ENCODE measurements at regions of chr1 and their contacts with region 1.

Region 1: GRCh38 chr1:203795441-203796235 is at the starts of genes ZBED6 and ZC3H11A:
- DNase-seq: peak; percentile 99
- ATAC-seq: peak; percentile 96
- H3K4me3 ChIP-seq: peak within 1 kb of the TSS; percentile 89
- H3K27ac ChIP-seq: peak within 1 kb of the TSS; percentile 78
- H3K4me1 ChIP-seq: peaks cover 25% of the 10 kb centered on the region
- H3K27me3 ChIP-seq: no peaks in the 10 kb centered on the region
- CTCF ChIP-seq: no peak
- total RNA-seq, gene ZBED6: 12.9 and 13.1 TPM in 2 replicates
- total RNA-seq, gene ZC3H11A: 64.6 and 77.9 TPM in 2 replicates

Region 2: GRCh38 chr1:203534527-203535230 is 261.0 kb before region 1 on chr1:
- CTCF ChIA-PET with region 1: no interaction called
- POLR2A ChIA-PET with region 1: no interaction called
- intact Hi-C with region 1: loop called (anchors 10 kb)
- DNase-seq: peak; percentile 99
- ATAC-seq: peak; percentile 68
- H3K4me3 ChIP-seq: peak overlapping the region; percentile 3; the same call in 1 of the 2 replicates
- H3K27ac ChIP-seq: peak overlapping the region; percentile 87
- H3K4me1 ChIP-seq: peaks cover 63% of the 10 kb centered on the region
- H3K27me3 ChIP-seq: no peaks in the 10 kb centered on the region
- CTCF ChIP-seq: no peak

Region 3: GRCh38 chr1:203720262-203720661 is 75.4 kb before region 1 on chr1:
- CTCF ChIA-PET with region 1: no interaction called
- POLR2A ChIA-PET with region 1: no interaction called
- intact Hi-C with region 1: no loop called
- DNase-seq: peak; percentile 44
- ATAC-seq: peak; percentile 96
- H3K4me3 ChIP-seq: no peak overlapping the region
- H3K27ac ChIP-seq: no peak overlapping the region
- H3K4me1 ChIP-seq: peaks cover 11% of the 10 kb centered on the region
- H3K27me3 ChIP-seq: no peaks in the 10 kb centered on the region
- CTCF ChIP-seq: no peak

Region 4: DNA sequence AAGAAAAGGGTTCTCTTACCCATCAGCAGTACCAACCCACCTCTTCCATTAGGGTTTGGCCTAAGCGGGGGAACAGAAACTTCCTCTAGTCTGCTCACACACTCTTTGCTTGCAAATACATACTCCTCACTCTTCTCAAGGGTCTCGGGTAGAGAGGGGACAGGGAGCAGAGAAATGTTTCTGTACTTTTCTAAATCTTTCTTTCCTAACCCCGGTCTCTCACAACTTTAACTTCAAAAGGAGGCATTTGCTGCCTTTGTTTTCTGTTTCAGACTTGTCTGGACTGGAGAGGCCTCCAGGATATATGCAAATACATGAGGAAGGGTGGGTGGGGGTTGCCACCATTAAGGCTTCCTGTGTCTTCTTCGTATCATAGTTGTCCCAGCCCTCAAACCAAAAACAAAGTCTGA is 41.2 kb before region 1 on chr1:
- CTCF ChIA-PET with region 1: no interaction called
- POLR2A ChIA-PET with region 1: no interaction called
- intact Hi-C with region 1: no loop called
- DNase-seq: no peak
- ATAC-seq: no peak
- H3K4me3 ChIP-seq: no peak overlapping the region
- H3K27ac ChIP-seq: no peak overlapping the region
- H3K4me1 ChIP-seq: no peaks in the 10 kb centered on the region
- H3K27me3 ChIP-seq: no peaks in the 10 kb centered on the region
- CTCF ChIP-seq: no peak

Region 5: DNA sequence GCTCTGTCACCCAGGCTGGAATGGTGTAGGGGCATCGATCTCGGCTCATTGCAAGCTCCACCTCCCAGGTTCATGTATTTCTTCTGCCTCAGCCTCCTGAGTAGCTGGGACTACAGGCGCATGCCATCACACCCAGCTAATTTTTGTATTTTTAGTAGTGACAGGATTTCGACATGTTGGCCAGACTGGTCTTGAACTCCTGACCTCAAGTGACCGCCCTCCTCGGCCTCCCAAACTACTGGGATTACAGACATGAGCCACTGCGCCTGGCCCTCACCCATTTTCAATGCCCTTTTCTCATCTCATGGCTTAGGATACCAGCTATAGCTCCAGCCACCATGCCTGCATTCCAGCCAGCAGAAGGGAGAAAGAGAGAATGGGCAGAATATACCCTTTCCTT is 264.3 kb after region 1 on chr1:
- CTCF ChIA-PET with region 1: no interaction called
- POLR2A ChIA-PET with region 1: no interaction called
- intact Hi-C with region 1: loop called (anchors 5 kb)
- DNase-seq: no peak
- ATAC-seq: no peak
- H3K4me3 ChIP-seq: no peak overlapping the region
- H3K27ac ChIP-seq: no peak overlapping the region
- H3K4me1 ChIP-seq: peaks cover 32% of the 10 kb centered on the region
- H3K27me3 ChIP-seq: no peaks in the 10 kb centered on the region
- CTCF ChIP-seq: no peak

Region 6: GRCh38 chr1:204072931-204073836 is 277.5 kb after region 1 on chr1 and contains the start of gene SOX13:
- CTCF ChIA-PET with region 1: no interaction called
- POLR2A ChIA-PET with region 1: interaction called, 20 read pairs
- intact Hi-C with region 1: no loop called
- DNase-seq: peak; percentile 89
- ATAC-seq: peak; percentile 78
- H3K4me3 ChIP-seq: peak within 1 kb of the TSS; percentile 88
- H3K27ac ChIP-seq: peak within 1 kb of the TSS; percentile 57
- H3K4me1 ChIP-seq: peaks cover 27% of the 10 kb centered on the region
- H3K27me3 ChIP-seq: no peaks in the 10 kb centered on the region
- CTCF ChIP-seq: peak; percentile 32
- total RNA-seq, gene SOX13: 81.9 and 93.1 TPM in 2 replicates